ENCODE measurements at regions of chr7 and their contacts with region 1.

Region 1: GRCh38 chr7:51067757-51068156 is 248.9 kb downstream of the COBL start:
- DNase-seq: peak; percentile 72
- ATAC-seq: no peak
- H3K4me3 Mint-ChIP-seq: no peak overlapping the region
- H3K27ac Mint-ChIP-seq: no peak overlapping the region
- H3K4me1 Mint-ChIP-seq: no peaks in the 10 kb centered on the region
- H3K27me3 Mint-ChIP-seq: no peaks in the 10 kb centered on the region

Region 2: DNA sequence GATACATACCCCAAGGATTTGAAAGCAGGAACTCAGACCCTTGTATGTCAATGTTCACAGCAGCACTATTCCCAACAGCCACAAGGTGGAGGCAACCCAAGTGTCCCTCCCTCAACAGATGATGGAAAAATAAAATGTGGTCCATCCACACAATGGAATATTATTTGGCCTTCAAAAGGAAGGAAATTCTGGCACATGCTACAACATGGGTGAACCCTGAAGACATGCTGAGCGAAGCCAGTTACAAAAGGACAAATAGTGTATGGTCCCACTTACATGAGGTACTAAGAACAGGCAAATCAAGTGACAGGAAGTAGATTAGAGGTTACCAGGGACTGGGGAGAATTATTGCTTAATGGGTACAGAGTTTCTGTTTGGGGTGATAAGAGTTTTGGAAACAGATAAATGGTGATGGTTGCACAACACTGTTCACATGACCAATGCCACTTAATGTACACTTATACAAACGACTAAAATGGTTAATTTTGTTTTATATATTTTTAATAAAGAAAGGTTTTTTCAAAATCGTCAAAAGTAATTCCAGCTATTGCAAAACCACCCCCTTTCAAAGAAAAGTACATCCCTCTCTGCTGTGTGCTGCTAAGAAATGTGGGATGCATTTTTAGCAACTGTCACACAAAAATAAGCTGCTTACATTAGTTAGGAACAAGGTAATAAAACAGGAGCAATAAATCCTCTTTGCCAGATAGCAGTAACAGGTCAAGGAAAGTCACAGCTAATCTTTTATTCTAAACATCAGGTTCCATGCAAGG is 370.8 kb before region 1 on chr7:
- CTCF ChIA-PET with region 1: no interaction called
- POLR2A ChIA-PET with region 1: no interaction called
- intact Hi-C with region 1: loop called (anchors 5 to 10 kb)
- DNase-seq: peak; percentile 27
- ATAC-seq: peak; percentile 33
- H3K4me3 Mint-ChIP-seq: no peak overlapping the region
- H3K27ac Mint-ChIP-seq: no peak overlapping the region
- H3K4me1 Mint-ChIP-seq: peaks cover 13% of the 10 kb centered on the region
- H3K27me3 Mint-ChIP-seq: peaks cover 3% of the 10 kb centered on the region

Region 3: GRCh38 chr7:50706451-50706937 is 361.3 kb before region 1 on chr7:
- CTCF ChIA-PET with region 1: no interaction called
- POLR2A ChIA-PET with region 1: no interaction called
- intact Hi-C with region 1: loop called in 1 of 2 experiments (anchors 10 kb)
- DNase-seq: no peak
- ATAC-seq: no peak
- H3K4me3 Mint-ChIP-seq: no peak overlapping the region
- H3K27ac Mint-ChIP-seq: no peak overlapping the region
- H3K4me1 Mint-ChIP-seq: no peaks in the 10 kb centered on the region
- H3K27me3 Mint-ChIP-seq: no peaks in the 10 kb centered on the region

Region 4: GRCh38 chr7:50782384-50783208 is 285.2 kb before region 1 on chr7 and contains the start of gene GRB10:
- CTCF ChIA-PET with region 1: no interaction called
- POLR2A ChIA-PET with region 1: no interaction called
- intact Hi-C with region 1: loop called in 1 of 2 experiments (anchors 1 kb)
- DNase-seq: no peak
- ATAC-seq: no peak
- H3K4me3 Mint-ChIP-seq: peak within 1 kb of the TSS; percentile 49
- H3K27ac Mint-ChIP-seq: peak within 1 kb of the TSS; percentile 48
- H3K4me1 Mint-ChIP-seq: peaks cover 16% of the 10 kb centered on the region
- H3K27me3 Mint-ChIP-seq: peaks cover 28% of the 10 kb centered on the region
- total RNA-seq, gene GRB10: 9.5 to 11.9 TPM

Region 5: GRCh38 chr7:51154201-51154600 is 86.4 kb after region 1 on chr7:
- CTCF ChIA-PET with region 1: no interaction called
- POLR2A ChIA-PET with region 1: no interaction called
- intact Hi-C with region 1: no loop called
- DNase-seq: no peak
- ATAC-seq: no peak
- H3K4me3 Mint-ChIP-seq: no peak overlapping the region
- H3K27ac Mint-ChIP-seq: no peak overlapping the region
- H3K4me1 Mint-ChIP-seq: no peaks in the 10 kb centered on the region
- H3K27me3 Mint-ChIP-seq: peaks cover 3% of the 10 kb centered on the region

Region 6: DNA sequence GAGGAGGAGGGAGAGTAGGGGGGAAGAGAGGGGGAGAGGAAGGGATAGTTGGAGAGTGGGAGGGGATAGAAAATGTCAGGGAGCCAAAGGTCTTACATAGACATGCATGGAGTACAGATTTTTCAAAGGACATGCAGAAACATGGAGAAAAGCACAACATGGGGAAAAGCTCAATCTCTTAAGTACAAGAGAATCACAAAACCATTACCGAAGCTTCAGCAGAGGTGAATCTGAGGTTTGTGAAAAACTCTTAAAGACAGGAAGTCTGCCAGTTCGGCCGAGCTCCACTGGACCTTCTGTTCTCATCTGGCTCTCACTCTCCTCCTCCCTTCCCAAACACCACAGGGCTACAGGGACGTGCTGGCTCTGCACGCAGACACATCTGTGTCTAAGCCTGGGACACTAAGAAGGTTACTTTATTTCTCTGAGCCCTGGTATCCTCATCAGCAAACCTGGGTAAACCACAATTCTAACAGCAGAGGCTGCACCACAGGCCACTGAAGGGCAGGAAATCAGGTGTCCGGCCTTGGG is 114.9 kb after region 1 on chr7:
- CTCF ChIA-PET with region 1: no interaction called
- POLR2A ChIA-PET with region 1: no interaction called
- intact Hi-C with region 1: no loop called
- DNase-seq: no peak
- ATAC-seq: no peak
- H3K4me3 Mint-ChIP-seq: no peak overlapping the region
- H3K27ac Mint-ChIP-seq: no peak overlapping the region
- H3K4me1 Mint-ChIP-seq: no peaks in the 10 kb centered on the region
- H3K27me3 Mint-ChIP-seq: peaks cover 5% of the 10 kb centered on the region

Region 7: DNA sequence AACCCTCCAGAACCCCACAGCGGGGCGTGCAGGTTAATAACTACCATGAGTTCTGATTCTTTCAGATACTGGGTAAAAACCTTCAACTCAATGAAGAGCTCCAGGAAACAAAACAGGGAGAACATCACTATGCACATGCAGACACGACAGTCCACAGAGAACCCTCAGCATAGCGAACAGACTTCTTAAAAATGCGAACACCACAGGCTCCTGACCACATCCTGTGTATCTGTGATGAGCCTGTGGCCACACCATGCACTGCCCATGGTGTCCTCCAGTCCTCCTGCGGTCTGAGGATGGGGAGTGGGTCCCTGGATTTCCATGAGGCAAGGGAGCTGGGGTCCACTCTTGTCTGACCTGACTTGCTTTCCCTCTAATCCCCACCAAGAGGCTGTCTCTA is 141.7 kb after region 1 on chr7:
- CTCF ChIA-PET with region 1: no interaction called
- POLR2A ChIA-PET with region 1: no interaction called
- intact Hi-C with region 1: no loop called
- DNase-seq: no peak
- ATAC-seq: no peak
- H3K4me3 Mint-ChIP-seq: no peak overlapping the region
- H3K27ac Mint-ChIP-seq: no peak overlapping the region
- H3K4me1 Mint-ChIP-seq: no peaks in the 10 kb centered on the region
- H3K27me3 Mint-ChIP-seq: no peaks in the 10 kb centered on the region